Naive thymus-derived CD8-positive, alpha-beta T cell (primary cell): ENCODE measurements at regions of chr14 and their contacts with region 1.

Region 1: DNA sequence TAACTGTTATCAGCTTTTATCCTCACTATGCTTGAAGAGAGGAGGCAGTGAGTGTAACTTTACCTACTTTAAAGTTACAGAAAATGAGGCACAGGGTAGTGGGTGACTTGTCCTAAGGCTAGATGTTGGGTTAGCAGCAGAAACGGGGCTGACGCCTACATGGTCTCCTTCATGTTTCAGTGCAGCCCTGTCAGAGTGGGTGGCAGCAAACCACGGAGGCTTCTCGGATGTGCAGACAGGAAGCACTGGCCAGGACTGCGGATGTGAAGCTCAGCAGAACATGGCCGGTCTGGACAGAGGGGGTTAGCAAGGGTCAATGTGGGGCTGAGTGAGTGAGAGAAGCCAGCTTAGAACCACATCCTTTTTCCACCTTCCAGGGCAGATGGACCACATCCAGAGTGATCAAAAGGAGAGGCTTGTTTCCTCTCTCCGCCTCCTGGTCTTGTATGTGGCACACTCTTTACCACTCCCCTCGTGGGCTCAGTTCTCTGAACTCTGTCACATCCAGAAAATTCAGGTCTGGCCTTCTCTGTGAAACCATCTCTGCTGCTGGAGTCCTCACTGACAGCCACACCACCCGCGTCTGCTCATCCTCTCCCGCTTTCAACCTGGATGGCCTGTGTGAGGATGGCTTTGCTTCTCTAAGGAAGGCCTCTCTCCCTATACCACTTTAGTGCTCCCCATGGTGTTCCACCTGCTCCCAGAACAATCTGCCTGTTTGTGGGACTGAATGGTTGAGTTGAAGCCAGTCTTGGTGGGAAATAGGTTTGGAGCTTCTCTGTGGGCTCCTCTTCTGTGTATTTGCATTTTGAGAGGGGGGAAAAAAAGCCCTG is 14.1 kb downstream of the SUSD6 start:
- DNase-seq: peak; percentile 34 to 78 (median 68)
- ATAC-seq: peak; percentile 94
- H3K4me3 Mint-ChIP-seq: peak overlapping the region; percentile 70 to 86 (median 82)
- H3K27ac Mint-ChIP-seq: peak overlapping the region; percentile 81 to 93 (median 92)
- H3K4me1 Mint-ChIP-seq: peaks cover 50 to 94% (median 89%) of the 10 kb centered on the region in 4 donors
- H3K27me3 Mint-ChIP-seq: no peaks in the 10 kb centered on the region

Region 2: GRCh38 chr14:69611201-69612011 is 14.1 kb before region 1 on chr14 and contains the start of gene SUSD6:
- POLR2A ChIA-PET with region 1: interaction called, 29 read pairs
- DNase-seq: peak; percentile 81 to 93 (median 86)
- ATAC-seq: peak; percentile 76 to 77
- H3K4me3 Mint-ChIP-seq: peak within 1 kb of the TSS; percentile 89 to 97 (median 92)
- H3K27ac Mint-ChIP-seq: peak within 1 kb of the TSS; percentile 97 to 100 (median 99)
- H3K4me1 Mint-ChIP-seq: peaks cover 37 to 59% (median 57%) of the 10 kb centered on the region in 4 donors
- H3K27me3 Mint-ChIP-seq: no peaks in the 10 kb centered on the region
- polyA plus RNA-seq, gene SUSD6: 4.5 to 6.8 (median 5.6) TPM

Region 3: GRCh38 chr14:69643443-69644164 is 18.1 kb after region 1 on chr14:
- POLR2A ChIA-PET with region 1: no interaction called
- DNase-seq: peak in 1 of 10 donors; percentile 47
- ATAC-seq: peak in 1 of 2 donors; percentile 77
- H3K4me3 Mint-ChIP-seq: peak overlapping the region in 6 of 10 donors; percentile 1 to 44 (median 18)
- H3K27ac Mint-ChIP-seq: peak overlapping the region in 5 of 10 donors; percentile 13 to 88 (median 54)
- H3K4me1 Mint-ChIP-seq: peaks cover 36 to 91% (median 81%) of the 10 kb centered on the region in 4 donors
- H3K27me3 Mint-ChIP-seq: no peaks in the 10 kb centered on the region

Region 4: DNA sequence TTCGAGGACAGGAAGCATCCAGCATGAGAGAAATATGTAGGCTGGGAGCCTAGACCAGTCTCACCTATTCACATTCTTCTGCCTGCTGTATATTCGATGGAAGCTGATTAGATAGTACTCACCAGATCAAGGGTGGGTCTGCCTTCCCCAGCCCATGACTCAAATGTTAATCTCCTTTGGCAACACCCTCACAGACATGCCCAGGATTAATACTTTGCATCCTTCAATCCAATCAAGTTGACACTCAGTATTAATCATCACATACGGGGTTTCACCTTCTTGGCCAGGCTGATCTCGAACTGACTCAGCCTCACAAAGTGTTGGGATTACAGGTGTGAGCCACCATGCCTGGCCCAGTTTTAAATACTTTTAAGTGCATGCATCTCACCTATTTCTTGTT is 202.0 kb after region 1 on chr14:
- POLR2A ChIA-PET with region 1: no interaction called
- DNase-seq: no peak
- ATAC-seq: no peak
- H3K4me3 Mint-ChIP-seq: no peak overlapping the region
- H3K27ac Mint-ChIP-seq: no peak overlapping the region
- H3K4me1 Mint-ChIP-seq: no peaks in the 10 kb centered on the region
- H3K27me3 Mint-ChIP-seq: peaks cover 0 to 8% (median 6%) of the 10 kb centered on the region in 5 donors